ENCODE measurements at regions of chr11 and their contacts with region 1.

Region 1: GRCh38 chr11:19903620-19904069 is 191.0 kb downstream of the NAV2 start:
- DNase-seq: peak; percentile 65
- H3K4me3 Mint-ChIP-seq: no peak overlapping the region
- H3K27ac Mint-ChIP-seq: no peak overlapping the region
- H3K4me1 Mint-ChIP-seq: no peaks in the 10 kb centered on the region
- H3K27me3 Mint-ChIP-seq: peaks cover 3% of the 10 kb centered on the region

Region 2: GRCh38 chr11:19561011-19561410 is 342.6 kb before region 1 on chr11:
- CTCF ChIA-PET with region 1: interaction called, 14 read pairs
- DNase-seq: no peak
- H3K4me3 Mint-ChIP-seq: no peak overlapping the region
- H3K27ac Mint-ChIP-seq: no peak overlapping the region
- H3K4me1 Mint-ChIP-seq: no peaks in the 10 kb centered on the region
- H3K27me3 Mint-ChIP-seq: peaks cover 21% of the 10 kb centered on the region